ENCODE measurements at regions of chr1 and their contacts with region 1.

Region 1: GRCh38 chr1:9651565-9652378 is at the start of gene PIK3CD:
- DNase-seq: peak; percentile 61
- H3K4me3 Mint-ChIP-seq: peak within 1 kb of the TSS; percentile 97
- H3K27ac Mint-ChIP-seq: peak within 1 kb of the TSS; percentile 100
- H3K4me1 Mint-ChIP-seq: peaks cover 39% of the 10 kb centered on the region
- H3K27me3 Mint-ChIP-seq: no peaks in the 10 kb centered on the region
- total RNA-seq, gene PIK3CD: 129 to 138 TPM

Region 2: DNA sequence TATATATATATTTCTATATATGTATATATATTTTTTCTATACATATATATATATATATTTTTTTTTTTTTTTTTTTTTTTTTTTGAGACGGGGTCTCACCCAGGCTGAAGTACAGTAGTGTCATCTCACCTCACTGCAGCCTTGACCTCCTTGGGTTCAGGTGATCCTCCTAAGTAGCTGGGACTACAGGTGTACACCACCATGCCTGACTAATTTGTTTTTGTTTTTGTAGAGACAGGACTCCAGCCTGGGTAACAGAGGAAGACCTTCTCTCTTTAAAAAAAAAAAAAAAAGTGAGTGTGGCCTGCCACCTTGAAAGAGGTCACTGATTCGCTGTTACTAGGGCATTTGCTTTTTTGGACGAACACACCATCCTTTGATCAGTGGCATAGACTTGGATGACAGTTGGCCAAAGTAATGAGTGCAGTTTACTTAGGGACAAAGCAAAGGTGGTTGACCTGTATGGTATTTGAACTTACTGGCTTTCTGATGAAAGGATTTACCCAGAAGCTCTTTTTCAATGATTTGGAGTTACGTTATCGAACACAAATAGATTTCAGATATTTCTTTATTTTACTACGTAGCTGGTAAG is 101.7 kb before region 1 on chr1:
- CTCF ChIA-PET with region 1: no interaction called
- POLR2A ChIA-PET with region 1: no interaction called
- intact Hi-C with region 1: no loop called
- DNase-seq: no peak
- H3K4me3 Mint-ChIP-seq: no peak overlapping the region
- H3K27ac Mint-ChIP-seq: no peak overlapping the region
- H3K4me1 Mint-ChIP-seq: no peaks in the 10 kb centered on the region
- H3K27me3 Mint-ChIP-seq: no peaks in the 10 kb centered on the region

Region 3: GRCh38 chr1:9665193-9665592 is 13.4 kb after region 1 on chr1:
- CTCF ChIA-PET with region 1: interaction called, 7 read pairs
- POLR2A ChIA-PET with region 1: interaction called, 47 read pairs
- intact Hi-C with region 1: loop called (anchors 1 kb)
- DNase-seq: no peak
- H3K4me3 Mint-ChIP-seq: no peak overlapping the region
- H3K27ac Mint-ChIP-seq: peak overlapping the region; percentile 8
- H3K4me1 Mint-ChIP-seq: peaks cover 48% of the 10 kb centered on the region
- H3K27me3 Mint-ChIP-seq: no peaks in the 10 kb centered on the region

Region 4: GRCh38 chr1:9671377-9672140 is 19.8 kb after region 1 on chr1:
- CTCF ChIA-PET with region 1: interaction called, 6 read pairs
- POLR2A ChIA-PET with region 1: interaction called, 47 read pairs
- intact Hi-C with region 1: loop called (anchors 1 kb)
- DNase-seq: peak; percentile 56
- H3K4me3 Mint-ChIP-seq: peak overlapping the region; percentile 28
- H3K27ac Mint-ChIP-seq: peak overlapping the region; percentile 92
- H3K4me1 Mint-ChIP-seq: peaks cover 58% of the 10 kb centered on the region
- H3K27me3 Mint-ChIP-seq: no peaks in the 10 kb centered on the region

Region 5: GRCh38 chr1:9689011-9689706 is 37.4 kb after region 1 on chr1:
- CTCF ChIA-PET with region 1: interaction called, 4 read pairs
- POLR2A ChIA-PET with region 1: interaction called, 6 read pairs
- intact Hi-C with region 1: loop called (anchors 2 kb)
- DNase-seq: peak; percentile 85
- H3K4me3 Mint-ChIP-seq: peak overlapping the region; percentile 64
- H3K27ac Mint-ChIP-seq: no peak overlapping the region
- H3K4me1 Mint-ChIP-seq: peaks cover 70% of the 10 kb centered on the region
- H3K27me3 Mint-ChIP-seq: no peaks in the 10 kb centered on the region

Region 6: GRCh38 chr1:9717193-9718005 is 65.6 kb after region 1 on chr1:
- CTCF ChIA-PET with region 1: interaction called, 24 read pairs
- POLR2A ChIA-PET with region 1: interaction called, 23 read pairs
- intact Hi-C with region 1: loop called (anchors 1 kb)
- DNase-seq: peak; percentile 95
- H3K4me3 Mint-ChIP-seq: peak overlapping the region; percentile 87
- H3K27ac Mint-ChIP-seq: peak overlapping the region; percentile 94
- H3K4me1 Mint-ChIP-seq: peaks cover 61% of the 10 kb centered on the region
- H3K27me3 Mint-ChIP-seq: no peaks in the 10 kb centered on the region

Region 7: GRCh38 chr1:9736241-9736640 is 84.5 kb after region 1 on chr1:
- CTCF ChIA-PET with region 1: no interaction called
- POLR2A ChIA-PET with region 1: no interaction called
- intact Hi-C with region 1: no loop called
- DNase-seq: no peak
- H3K4me3 Mint-ChIP-seq: no peak overlapping the region
- H3K27ac Mint-ChIP-seq: no peak overlapping the region
- H3K4me1 Mint-ChIP-seq: peaks cover 13% of the 10 kb centered on the region
- H3K27me3 Mint-ChIP-seq: no peaks in the 10 kb centered on the region